ENCODE measurements at regions of chr18 and their contacts with region 1.

Region 1: DNA sequence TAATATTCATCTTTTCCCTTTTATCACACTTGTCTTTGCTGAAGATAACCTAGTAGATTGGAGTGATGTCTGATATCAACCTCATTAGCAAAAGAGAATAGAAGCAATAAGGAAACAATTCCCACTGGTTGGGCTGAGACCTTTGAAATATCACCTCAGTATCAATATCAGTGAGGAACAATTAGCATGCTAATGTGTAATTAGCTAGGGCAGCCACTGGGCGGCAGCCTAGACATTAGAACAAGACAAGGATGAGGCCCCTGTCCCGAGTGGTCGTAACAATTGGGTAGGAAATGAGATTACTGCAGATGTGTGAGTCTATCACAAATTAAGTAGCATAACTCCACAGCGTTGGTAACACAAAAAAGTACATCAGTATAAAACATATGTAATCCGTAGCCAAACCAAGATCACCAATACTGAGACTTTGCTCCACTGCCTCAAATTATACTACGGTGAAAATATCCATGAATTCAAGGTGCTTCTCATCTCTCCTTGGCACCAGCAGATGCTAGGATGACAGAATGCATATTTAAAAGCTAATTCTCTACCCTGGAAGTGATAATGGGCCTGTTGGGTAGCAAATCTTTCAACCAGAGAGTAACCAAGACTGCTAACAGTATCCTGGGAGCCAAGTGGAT is 99.1 kb downstream of the ALPK2 start:
- DNase-seq: peak; percentile 49 to 68 (median 62)
- H3K4me3 ChIP-seq: no peak overlapping the region
- H3K4me3 Mint-ChIP-seq: no peak overlapping the region
- H3K27ac ChIP-seq: no peak overlapping the region
- H3K27ac Mint-ChIP-seq: no peak overlapping the region
- H3K4me1 ChIP-seq: peaks cover 4% of the 10 kb centered on the region
- H3K4me1 Mint-ChIP-seq: peaks cover 4 to 5% (median 5%) of the 10 kb centered on the region in 4 donors
- H3K27me3 ChIP-seq: no peaks in the 10 kb centered on the region
- H3K27me3 Mint-ChIP-seq: peaks cover 0 to 3% of the 10 kb centered on the region in 2 donors

Region 2: DNA sequence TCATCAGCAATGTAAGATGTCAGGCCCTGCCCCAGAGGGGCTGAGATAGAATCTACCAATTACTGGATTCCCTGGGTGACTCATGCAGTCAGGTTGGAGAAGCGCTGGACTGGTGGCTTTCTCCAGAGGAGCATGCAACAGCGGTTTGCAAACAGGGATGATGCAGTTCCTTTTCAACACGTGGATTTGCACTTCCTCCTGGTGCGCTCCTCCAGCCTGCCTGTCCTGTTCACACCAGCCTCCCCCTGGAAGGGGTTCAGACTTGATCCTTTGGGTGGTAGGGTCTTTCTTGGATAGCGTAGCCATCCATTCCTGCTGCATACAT is 327.5 kb before region 1 on chr18:
- CTCF ChIA-PET with region 1: no interaction called
- POLR2A ChIA-PET with region 1: no interaction called
- intact Hi-C with region 1: no loop called
- DNase-seq: no peak
- H3K4me3 ChIP-seq: no peak overlapping the region
- H3K4me3 Mint-ChIP-seq: no peak overlapping the region
- H3K27ac ChIP-seq: no peak overlapping the region
- H3K27ac Mint-ChIP-seq: no peak overlapping the region
- H3K4me1 ChIP-seq: no peaks in the 10 kb centered on the region
- H3K4me1 Mint-ChIP-seq: no peaks in the 10 kb centered on the region
- H3K27me3 ChIP-seq: no peaks in the 10 kb centered on the region
- H3K27me3 Mint-ChIP-seq: peaks cover 0 to 7% of the 10 kb centered on the region in 2 donors

Region 3: DNA sequence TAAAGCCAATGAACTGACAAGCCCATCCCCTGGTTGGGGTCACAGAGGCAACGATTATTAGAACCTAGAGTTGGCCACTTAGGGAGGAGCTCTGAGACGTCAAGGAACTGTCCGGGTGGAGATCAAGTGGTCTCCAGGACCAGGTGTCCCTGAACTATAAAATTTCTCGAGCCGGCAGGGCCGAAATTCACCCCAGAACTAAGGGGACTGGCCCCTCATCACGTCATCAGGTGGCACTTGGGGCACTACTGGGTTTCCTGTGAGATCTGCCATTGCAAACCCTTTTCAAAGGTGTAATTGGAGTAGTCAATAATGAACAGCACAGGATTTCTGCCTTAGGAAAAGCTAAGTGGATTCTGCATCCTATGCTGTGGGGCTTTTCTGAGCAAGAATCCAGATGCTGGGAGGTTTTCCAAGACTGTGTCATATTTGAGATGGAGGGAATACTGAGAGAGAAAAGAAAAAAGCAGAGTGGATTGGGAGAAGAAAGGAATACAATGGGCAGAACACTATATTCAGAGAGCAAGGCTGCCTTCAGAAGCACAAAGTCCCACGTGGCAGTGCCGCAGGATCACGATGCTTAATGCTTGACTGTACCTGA is 14.6 kb before region 1 on chr18:
- CTCF ChIA-PET with region 1: interaction called, 14 read pairs
- POLR2A ChIA-PET with region 1: no interaction called
- intact Hi-C with region 1: no loop called
- DNase-seq: no peak
- H3K4me3 ChIP-seq: no peak overlapping the region
- H3K4me3 Mint-ChIP-seq: no peak overlapping the region
- H3K27ac ChIP-seq: no peak overlapping the region
- H3K27ac Mint-ChIP-seq: peak overlapping the region in 1 of 7 donors; percentile 12
- H3K4me1 ChIP-seq: no peaks in the 10 kb centered on the region
- H3K4me1 Mint-ChIP-seq: peaks cover 0 to 4% (median 0%) of the 10 kb centered on the region in 4 donors
- H3K27me3 ChIP-seq: no peaks in the 10 kb centered on the region
- H3K27me3 Mint-ChIP-seq: peaks cover 3 to 13% of the 10 kb centered on the region in 2 donors

Region 4: GRCh38 chr18:58541789-58542425 is 12.1 kb after region 1 on chr18:
- CTCF ChIA-PET with region 1: interaction called, 57 read pairs
- POLR2A ChIA-PET with region 1: interaction called, 7 read pairs
- intact Hi-C with region 1: no loop called
- DNase-seq: peak; percentile 17 to 77 (median 37)
- H3K4me3 ChIP-seq: no peak overlapping the region
- H3K4me3 Mint-ChIP-seq: peak overlapping the region in 5 of 8 donors; percentile 38 to 65 (median 52)
- H3K27ac ChIP-seq: no peak overlapping the region
- H3K27ac Mint-ChIP-seq: peak overlapping the region in 6 of 7 donors; percentile 1 to 90 (median 70)
- H3K4me1 ChIP-seq: peaks cover 21% of the 10 kb centered on the region
- H3K4me1 Mint-ChIP-seq: peaks cover 21 to 31% (median 23%) of the 10 kb centered on the region in 4 donors
- H3K27me3 ChIP-seq: no peaks in the 10 kb centered on the region
- H3K27me3 Mint-ChIP-seq: no peaks in the 10 kb centered on the region

Region 5: DNA sequence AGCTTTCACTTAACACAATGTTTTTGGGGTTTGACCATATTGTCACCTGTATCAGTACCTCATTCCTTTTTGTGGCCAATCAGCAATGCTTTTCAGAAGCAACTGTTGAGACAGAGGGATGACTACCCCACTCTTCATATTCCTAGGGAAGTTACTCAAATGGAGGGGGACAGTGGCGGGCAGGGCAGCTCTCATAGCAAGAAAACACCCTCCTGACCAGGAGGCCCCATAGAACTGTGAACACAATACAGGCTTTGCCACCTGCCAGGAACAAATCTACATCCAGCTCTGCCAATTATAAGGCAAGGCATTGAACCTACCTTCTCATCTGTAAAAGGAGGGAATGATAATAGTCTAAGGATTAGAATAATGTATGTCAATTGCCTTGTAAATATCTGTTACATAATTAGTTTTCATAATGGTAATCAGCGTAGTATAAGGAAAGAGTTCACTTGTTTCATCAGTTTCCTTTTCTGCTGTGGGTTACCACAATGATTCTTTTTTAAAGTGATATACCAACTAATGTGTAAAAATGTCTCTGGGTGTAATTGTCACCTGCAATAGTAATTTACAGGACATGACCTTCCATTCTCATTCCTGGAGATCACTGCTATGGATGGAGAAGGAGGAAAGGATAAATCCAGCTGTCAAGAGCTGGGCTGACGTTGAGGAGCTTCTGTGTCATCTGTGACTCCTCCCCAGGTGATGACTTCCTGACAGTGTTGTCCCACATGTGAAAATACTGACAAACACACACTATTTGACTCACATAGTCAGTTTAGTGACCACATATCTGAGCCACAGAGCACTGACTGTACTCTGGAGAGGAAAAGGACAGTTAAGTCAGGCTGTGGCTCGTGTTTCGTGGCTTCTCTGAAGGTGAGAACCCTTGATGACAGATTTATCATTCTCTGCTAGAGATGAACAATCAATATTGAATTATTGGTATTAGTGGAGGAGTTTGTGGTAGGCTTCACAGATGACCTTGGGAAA is 85.6 kb after region 1 on chr18:
- CTCF ChIA-PET with region 1: interaction called, 4 read pairs
- POLR2A ChIA-PET with region 1: no interaction called
- intact Hi-C with region 1: loop called (anchors 5 kb)
- DNase-seq: peak; percentile 64 to 80 (median 77)
- H3K4me3 ChIP-seq: peak overlapping the region in 1 of 2 donors; percentile 12
- H3K4me3 Mint-ChIP-seq: peak overlapping the region; percentile 55 to 89 (median 82)
- H3K27ac ChIP-seq: peak overlapping the region; percentile 63
- H3K27ac Mint-ChIP-seq: peak overlapping the region; percentile 96 to 99 (median 99)
- H3K4me1 ChIP-seq: peaks cover 39% of the 10 kb centered on the region
- H3K4me1 Mint-ChIP-seq: peaks cover 33 to 57% (median 45%) of the 10 kb centered on the region in 4 donors
- H3K27me3 ChIP-seq: no peaks in the 10 kb centered on the region
- H3K27me3 Mint-ChIP-seq: no peaks in the 10 kb centered on the region

Region 6: DNA sequence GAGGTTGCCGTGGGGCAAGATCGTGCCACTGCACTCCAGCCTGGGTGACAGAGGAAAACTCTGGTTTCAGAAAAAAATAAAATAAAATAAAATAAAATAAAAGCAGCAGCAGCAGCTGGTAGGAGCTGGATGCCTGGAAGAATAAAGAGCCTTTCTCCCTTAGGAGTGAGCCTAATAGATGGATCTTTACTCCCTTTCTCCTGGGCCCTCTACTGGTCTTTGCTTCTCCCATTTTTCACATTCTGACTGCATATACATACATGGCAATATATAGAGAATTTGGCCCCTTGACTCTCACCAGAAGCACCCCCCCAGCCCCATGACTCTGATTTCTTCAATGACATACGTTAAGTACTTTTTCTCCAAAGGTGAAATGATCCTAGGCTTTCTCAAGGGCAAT is 131.6 kb after region 1 on chr18:
- CTCF ChIA-PET with region 1: interaction called, 15 read pairs
- POLR2A ChIA-PET with region 1: interaction called, 3 read pairs
- intact Hi-C with region 1: no loop called
- DNase-seq: no peak
- H3K4me3 ChIP-seq: no peak overlapping the region
- H3K4me3 Mint-ChIP-seq: no peak overlapping the region
- H3K27ac ChIP-seq: no peak overlapping the region
- H3K27ac Mint-ChIP-seq: peak overlapping the region in 1 of 7 donors; percentile 6
- H3K4me1 ChIP-seq: peaks cover 46% of the 10 kb centered on the region
- H3K4me1 Mint-ChIP-seq: peaks cover 31 to 56% (median 43%) of the 10 kb centered on the region in 4 donors
- H3K27me3 ChIP-seq: no peaks in the 10 kb centered on the region
- H3K27me3 Mint-ChIP-seq: no peaks in the 10 kb centered on the region

Region 7: GRCh38 chr18:58687871-58688308 is 158.1 kb after region 1 on chr18:
- CTCF ChIA-PET with region 1: interaction called, 10 read pairs
- POLR2A ChIA-PET with region 1: interaction called, 7 read pairs
- intact Hi-C with region 1: no loop called
- DNase-seq: peak; percentile 85 to 93 (median 91)
- H3K4me3 ChIP-seq: peak overlapping the region in 1 of 2 donors; percentile 21
- H3K4me3 Mint-ChIP-seq: peak overlapping the region; percentile 73 to 86 (median 81)
- H3K27ac ChIP-seq: peak overlapping the region; percentile 64
- H3K27ac Mint-ChIP-seq: peak overlapping the region; percentile 90 to 98 (median 96)
- H3K4me1 ChIP-seq: peaks cover 84% of the 10 kb centered on the region
- H3K4me1 Mint-ChIP-seq: peaks cover 58 to 77% (median 65%) of the 10 kb centered on the region in 4 donors
- H3K27me3 ChIP-seq: no peaks in the 10 kb centered on the region
- H3K27me3 Mint-ChIP-seq: no peaks in the 10 kb centered on the region

Region 8: GRCh38 chr18:58738322-58738721 is 208.5 kb after region 1 on chr18:
- CTCF ChIA-PET with region 1: no interaction called
- POLR2A ChIA-PET with region 1: no interaction called
- intact Hi-C with region 1: no loop called
- DNase-seq: no peak
- H3K4me3 ChIP-seq: no peak overlapping the region
- H3K4me3 Mint-ChIP-seq: no peak overlapping the region
- H3K27ac ChIP-seq: no peak overlapping the region
- H3K27ac Mint-ChIP-seq: peak overlapping the region in 2 of 7 donors; percentile 25 to 46
- H3K4me1 ChIP-seq: no peaks in the 10 kb centered on the region
- H3K4me1 Mint-ChIP-seq: peaks cover 6 to 17% (median 11%) of the 10 kb centered on the region in 4 donors
- H3K27me3 ChIP-seq: no peaks in the 10 kb centered on the region
- H3K27me3 Mint-ChIP-seq: no peaks in the 10 kb centered on the region

Region 9: GRCh38 chr18:59070181-59070912 is 540.5 kb after region 1 on chr18:
- CTCF ChIA-PET with region 1: interaction called, 4 read pairs
- POLR2A ChIA-PET with region 1: no interaction called
- intact Hi-C with region 1: loop called (anchors 5 kb)
- DNase-seq: peak; percentile 60 to 70 (median 61)
- H3K4me3 ChIP-seq: no peak overlapping the region
- H3K4me3 Mint-ChIP-seq: no peak overlapping the region
- H3K27ac ChIP-seq: no peak overlapping the region
- H3K27ac Mint-ChIP-seq: no peak overlapping the region
- H3K4me1 ChIP-seq: no peaks in the 10 kb centered on the region
- H3K4me1 Mint-ChIP-seq: peaks cover 0 to 1% (median 0%) of the 10 kb centered on the region in 4 donors
- H3K27me3 ChIP-seq: no peaks in the 10 kb centered on the region
- H3K27me3 Mint-ChIP-seq: peaks cover 0 to 1% of the 10 kb centered on the region in 2 donors

Measured in CD4-positive, alpha-beta memory T cell (primary cell).